ENCODE measurements at regions of chr3 and their contacts with region 1.

Region 1: DNA sequence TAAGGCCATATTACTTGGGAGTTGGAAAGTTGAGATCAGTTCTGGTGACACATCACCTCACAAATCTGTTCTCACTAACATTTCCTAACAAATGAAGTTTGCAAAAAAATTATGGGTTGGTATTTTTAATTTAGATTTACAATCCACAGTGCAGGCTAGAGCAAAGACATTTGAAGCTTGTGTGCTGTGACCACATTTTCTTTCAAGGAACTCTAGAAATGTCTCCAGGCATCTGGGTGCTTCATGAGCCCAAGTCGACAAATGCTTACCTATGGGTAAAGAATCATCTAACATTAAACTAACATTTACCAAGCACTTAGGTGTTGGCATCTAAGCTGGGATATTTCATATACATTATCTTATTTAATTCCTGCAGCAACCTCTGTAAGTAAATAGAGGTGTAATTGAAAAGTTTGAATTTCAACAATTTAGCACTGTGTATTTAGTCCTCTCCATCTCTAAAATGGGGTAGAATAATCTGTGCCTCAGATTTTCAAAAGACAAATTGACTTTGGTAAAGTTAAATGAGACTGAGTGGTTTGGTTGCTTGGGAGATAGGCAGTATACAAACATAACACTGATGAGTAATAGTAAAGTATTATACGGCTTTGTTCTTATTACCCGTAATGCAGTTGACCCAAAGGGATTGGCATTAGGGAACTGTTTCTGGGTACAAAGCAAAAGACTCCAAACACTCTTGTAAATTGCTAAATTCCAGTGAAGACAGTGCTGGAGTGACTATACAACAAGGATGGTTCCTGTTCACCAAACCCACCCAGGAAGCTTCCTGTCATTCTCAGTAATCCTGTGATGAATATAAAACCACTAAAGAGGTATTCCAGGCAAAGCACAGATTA is 162.5 kb downstream of the TPRG1 start:
- DNase-seq: no peak
- ATAC-seq: peak; percentile 19
- H3K4me3 Mint-ChIP-seq: no peak overlapping the region
- H3K27ac Mint-ChIP-seq: no peak overlapping the region
- H3K4me1 Mint-ChIP-seq: peaks cover 42% of the 10 kb centered on the region
- H3K27me3 Mint-ChIP-seq: no peaks in the 10 kb centered on the region

Region 2: DNA sequence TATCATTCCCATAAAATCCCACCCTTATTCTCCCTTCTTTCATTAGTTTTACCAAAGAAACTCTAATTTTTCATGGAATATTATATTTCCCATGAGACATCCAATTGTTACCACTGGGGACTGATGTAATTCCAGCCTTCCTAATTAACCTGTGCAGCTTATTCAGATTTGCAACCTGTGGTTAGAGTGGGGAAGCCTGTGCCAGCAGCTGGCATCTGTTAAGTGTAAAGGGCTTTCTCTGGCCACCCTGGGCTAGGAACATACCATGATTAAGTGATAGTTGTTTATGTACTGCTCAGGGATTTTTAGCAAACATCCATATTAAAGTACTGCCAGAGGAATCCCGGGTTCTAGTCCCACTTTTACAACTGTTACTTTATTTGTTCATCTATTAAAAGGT is 84.3 kb before region 1 on chr3:
- CTCF ChIA-PET with region 1: no interaction called
- POLR2A ChIA-PET with region 1: no interaction called
- intact Hi-C with region 1: no loop called
- DNase-seq: no peak
- ATAC-seq: no peak
- H3K4me3 Mint-ChIP-seq: no peak overlapping the region
- H3K27ac Mint-ChIP-seq: no peak overlapping the region
- H3K4me1 Mint-ChIP-seq: no peaks in the 10 kb centered on the region
- H3K27me3 Mint-ChIP-seq: no peaks in the 10 kb centered on the region

Region 3: DNA sequence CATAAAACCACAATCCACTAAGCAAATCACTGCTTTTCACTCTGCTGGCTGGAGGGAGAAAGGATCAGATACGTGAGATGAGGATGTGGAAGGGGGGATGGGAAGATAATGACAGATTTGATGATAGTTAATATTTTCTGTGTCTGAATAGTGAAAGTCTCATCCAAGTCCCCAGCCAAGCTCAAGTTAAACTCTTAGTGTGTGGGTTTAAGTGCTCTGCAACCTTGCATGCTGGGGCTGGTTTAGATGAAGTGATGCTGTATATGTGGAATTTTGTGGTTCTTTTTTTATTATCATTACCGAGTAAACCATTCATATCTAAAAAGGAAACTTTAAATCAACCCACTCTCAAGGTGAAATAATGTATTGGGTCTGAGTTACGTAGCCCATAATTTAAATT is 51.6 kb before region 1 on chr3:
- CTCF ChIA-PET with region 1: no interaction called
- POLR2A ChIA-PET with region 1: no interaction called
- intact Hi-C with region 1: no loop called
- DNase-seq: no peak
- ATAC-seq: peak; percentile 28
- H3K4me3 Mint-ChIP-seq: no peak overlapping the region
- H3K27ac Mint-ChIP-seq: no peak overlapping the region
- H3K4me1 Mint-ChIP-seq: peaks cover 30% of the 10 kb centered on the region
- H3K27me3 Mint-ChIP-seq: no peaks in the 10 kb centered on the region

Region 4: GRCh38 chr3:189298469-189299375 is 35.6 kb before region 1 on chr3:
- CTCF ChIA-PET with region 1: no interaction called
- POLR2A ChIA-PET with region 1: no interaction called
- intact Hi-C with region 1: loop called in 1 of 2 experiments (anchors 5 kb)
- DNase-seq: peak; percentile 42
- ATAC-seq: peak; percentile 89
- H3K4me3 Mint-ChIP-seq: no peak overlapping the region
- H3K27ac Mint-ChIP-seq: peak overlapping the region; percentile 82
- H3K4me1 Mint-ChIP-seq: peaks cover 68% of the 10 kb centered on the region
- H3K27me3 Mint-ChIP-seq: no peaks in the 10 kb centered on the region

Region 5: GRCh38 chr3:189304446-189305351 is 29.6 kb before region 1 on chr3:
- CTCF ChIA-PET with region 1: interaction called, 15 read pairs
- POLR2A ChIA-PET with region 1: interaction called, 7 read pairs
- intact Hi-C with region 1: loop called in 1 of 2 experiments (anchors 5 kb)
- DNase-seq: peak; percentile 58
- ATAC-seq: peak; percentile 47
- H3K4me3 Mint-ChIP-seq: peak overlapping the region; percentile 27
- H3K27ac Mint-ChIP-seq: peak overlapping the region; percentile 90
- H3K4me1 Mint-ChIP-seq: peaks cover 74% of the 10 kb centered on the region
- H3K27me3 Mint-ChIP-seq: no peaks in the 10 kb centered on the region

Region 6: DNA sequence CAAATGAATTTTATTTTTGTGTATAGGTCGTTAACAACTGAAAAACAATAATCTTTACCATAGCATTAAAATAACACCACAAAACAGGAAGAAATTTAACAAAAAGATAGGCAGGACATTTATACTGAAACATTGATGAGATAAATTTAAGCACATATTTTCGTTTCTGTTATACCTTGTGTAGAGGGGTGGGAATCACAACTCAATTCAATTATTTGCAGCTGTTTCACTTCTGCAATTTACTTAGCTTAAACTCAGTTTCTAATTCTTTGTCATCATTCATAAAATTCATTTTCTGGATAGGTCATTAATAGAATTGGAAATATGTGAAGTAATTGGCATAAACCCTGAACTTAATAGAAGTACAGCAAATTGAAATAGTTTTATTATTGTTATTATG is 339.2 kb after region 1 on chr3:
- CTCF ChIA-PET with region 1: no interaction called
- POLR2A ChIA-PET with region 1: no interaction called
- intact Hi-C with region 1: no loop called
- DNase-seq: no peak
- ATAC-seq: no peak
- H3K4me3 Mint-ChIP-seq: no peak overlapping the region
- H3K27ac Mint-ChIP-seq: no peak overlapping the region
- H3K4me1 Mint-ChIP-seq: no peaks in the 10 kb centered on the region
- H3K27me3 Mint-ChIP-seq: no peaks in the 10 kb centered on the region

Measured in activated CD4-positive, alpha-beta T cell treated with anti-CD3 and anti-CD28 coated beads for 36 hours (primary cell).